Esophagus muscularis mucosa (tissue), 4 donors: ENCODE measurements at regions of chr12 and their contacts with region 1.

Region 1: GRCh38 chr12:51172515-51173431 is at the start of gene TFCP2:
- DNase-seq: peak; percentile 99
- H3K4me3 ChIP-seq: peak within 1 kb of the TSS; percentile 64 to 90 (median 74)
- H3K27ac ChIP-seq: peak within 1 kb of the TSS; percentile 93 to 98 (median 95)
- H3K4me1 ChIP-seq: peaks cover 15 to 37% (median 29%) of the 10 kb centered on the region in 4 donors
- H3K27me3 ChIP-seq: no peaks in the 10 kb centered on the region
- CTCF ChIP-seq: no peak
- EP300 ChIP-seq: peak; percentile 13
- POLR2A ChIP-seq: peak; percentile 35
- total RNA-seq, gene TFCP2: 11.3 to 16.2 (median 15.2) TPM

Region 2: GRCh38 chr12:51217968-51218606 is 45.3 kb after region 1 on chr12 and contains the start of gene POU6F1:
- intact Hi-C with region 1: loop called (anchors 5 kb)
- DNase-seq: peak; percentile 93
- H3K4me3 ChIP-seq: peak within 1 kb of the TSS; percentile 80 to 98 (median 96)
- H3K27ac ChIP-seq: peak within 1 kb of the TSS; percentile 97 to 100 (median 99)
- H3K4me1 ChIP-seq: peaks cover 17 to 29% (median 25%) of the 10 kb centered on the region in 4 donors
- H3K27me3 ChIP-seq: no peaks in the 10 kb centered on the region
- CTCF ChIP-seq: peak; percentile 49 to 83 (median 49)
- EP300 ChIP-seq: no peak
- POLR2A ChIP-seq: no peak
- total RNA-seq, gene POU6F1: 13.3 to 27.2 (median 16.9) TPM